BJ (cell line): ENCODE measurements at regions of chr16 and their contacts with region 1.

Region 1: DNA sequence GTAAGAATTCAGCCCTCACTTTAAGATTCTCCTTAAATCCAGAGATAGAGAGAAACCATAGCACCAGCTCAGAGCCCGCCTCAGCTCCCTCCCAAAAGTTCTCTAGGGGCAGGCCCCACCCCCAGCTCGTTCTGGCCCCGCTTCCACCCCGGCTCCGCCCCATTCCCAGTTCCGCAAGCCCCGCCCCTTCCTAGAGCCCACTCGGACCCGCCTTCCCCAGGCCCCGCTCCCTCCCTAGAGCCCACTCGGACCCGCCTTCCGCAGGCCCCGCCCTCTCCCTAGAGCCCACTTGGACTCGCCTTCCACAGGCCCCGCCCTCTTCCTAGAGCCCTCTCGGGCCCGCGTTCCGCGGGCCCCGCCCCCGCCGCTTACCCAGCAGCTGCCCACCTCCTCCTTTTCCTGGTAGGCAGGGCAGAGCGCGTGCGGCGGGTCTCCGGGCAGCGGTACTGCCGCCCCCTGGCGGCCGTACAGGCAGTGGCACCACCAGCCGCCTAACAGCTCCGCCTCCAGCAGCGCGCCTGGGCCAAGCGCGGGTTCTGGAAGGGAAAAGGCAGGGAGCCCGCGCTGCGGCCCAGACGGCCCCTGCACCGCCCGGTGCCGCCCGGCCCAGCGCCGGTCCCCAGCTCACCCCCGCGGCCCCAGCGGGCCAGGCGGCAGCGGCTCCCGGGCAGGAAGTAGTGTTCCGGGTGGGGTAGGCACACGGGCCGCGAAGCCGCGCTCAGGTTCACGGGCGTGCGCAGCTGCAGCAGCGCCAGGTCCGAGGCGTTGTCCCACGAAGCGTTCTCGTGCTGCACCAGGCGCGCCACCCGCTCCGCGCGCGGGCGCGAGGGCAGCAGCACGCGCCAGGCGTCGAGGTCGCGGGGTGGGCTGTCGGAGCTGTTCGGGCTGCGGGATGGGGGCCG is 6.8 kb upstream of the PRSS8 start:
- DNase-seq: peak; percentile 90
- H3K4me3 ChIP-seq: peak overlapping the region; percentile 35
- H3K27me3 ChIP-seq: peaks cover 9% of the 10 kb centered on the region
- CTCF ChIP-seq: peak; percentile 96

Region 2: GRCh38 chr16:30984669-30985400 is 157.5 kb before region 1 on chr16 and contains the start of gene HSD3B7:
- CTCF ChIA-PET with region 1: interaction called, 33 read pairs
- POLR2A ChIA-PET with region 1: interaction called, 4 read pairs
- DNase-seq: no peak
- H3K4me3 ChIP-seq: peak within 1 kb of the TSS; percentile 44
- H3K27me3 ChIP-seq: no peaks in the 10 kb centered on the region
- CTCF ChIP-seq: peak; percentile 97
- polyA plus RNA-seq, gene HSD3B7: 15.4 and 25.0 TPM in 2 replicates

Region 3: GRCh38 chr16:31064882-31065461 is 77.4 kb before region 1 on chr16:
- CTCF ChIA-PET with region 1: no interaction called
- POLR2A ChIA-PET with region 1: no interaction called
- DNase-seq: peak; percentile 90
- H3K4me3 ChIP-seq: no peak overlapping the region
- H3K27me3 ChIP-seq: no peaks in the 10 kb centered on the region
- CTCF ChIP-seq: no peak

Region 4: GRCh38 chr16:31117391-31118197 is 24.8 kb before region 1 on chr16 and contains the start of gene KAT8:
- CTCF ChIA-PET with region 1: interaction called, 13 read pairs
- POLR2A ChIA-PET with region 1: interaction called, 19 read pairs
- DNase-seq: peak; percentile 83
- H3K4me3 ChIP-seq: peak within 1 kb of the TSS; percentile 77
- H3K27me3 ChIP-seq: no peaks in the 10 kb centered on the region
- CTCF ChIP-seq: no peak
- polyA plus RNA-seq, gene KAT8: 28.9 and 31.9 TPM in 2 replicates

Region 5: DNA sequence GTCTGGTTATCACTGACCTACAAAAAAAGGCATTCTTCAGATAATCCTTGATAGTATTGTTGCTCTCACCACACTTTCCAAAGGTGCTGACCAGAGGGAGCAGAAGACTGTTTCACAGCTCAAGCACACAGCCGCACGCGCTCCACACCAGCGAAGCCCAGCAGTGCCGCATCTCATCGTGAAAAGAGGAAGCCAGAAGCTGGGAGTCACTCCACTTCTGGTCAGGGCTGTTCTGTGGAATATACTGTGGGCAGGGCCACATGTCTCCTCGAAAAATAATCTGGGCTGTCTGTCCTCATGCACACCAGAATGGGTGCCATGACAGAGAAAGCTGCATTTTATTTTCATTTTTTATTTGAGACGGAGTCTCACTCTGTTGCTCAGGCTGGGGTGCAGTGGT is 14.8 kb after region 1 on chr16:
- CTCF ChIA-PET with region 1: interaction called, 29 read pairs
- POLR2A ChIA-PET with region 1: interaction called, 12 read pairs
- DNase-seq: no peak
- H3K4me3 ChIP-seq: no peak overlapping the region
- H3K27me3 ChIP-seq: peaks cover 4% of the 10 kb centered on the region; the same call in 1 of the 2 replicates
- CTCF ChIP-seq: no peak

Region 6: GRCh38 chr16:31179747-31180459 is 37.5 kb after region 1 on chr16 and contains the start of gene FUS:
- CTCF ChIA-PET with region 1: interaction called, 9 read pairs
- POLR2A ChIA-PET with region 1: interaction called, 20 read pairs
- DNase-seq: no peak
- H3K4me3 ChIP-seq: peak within 1 kb of the TSS; percentile 85
- H3K27me3 ChIP-seq: no peaks in the 10 kb centered on the region
- CTCF ChIP-seq: no peak
- polyA plus RNA-seq, gene FUS: 109 and 113 TPM in 2 replicates